ENCODE measurements at regions of chr9 and their contacts with region 1.

Region 1: GRCh38 chr9:130327070-130327780 is 61.7 kb downstream of the HMCN2 start:
- DNase-seq: peak in 1 of 2 experiments; percentile 92
- H3K4me3 ChIP-seq: no peak overlapping the region
- H3K27ac ChIP-seq: peak overlapping the region; percentile 43; the same call in 1 of the 2 replicates
- H3K4me1 ChIP-seq: no peaks in the 10 kb centered on the region; a peak in 1 of 7 replicates
- H3K27me3 ChIP-seq: no peaks in the 10 kb centered on the region
- CTCF ChIP-seq: peak in 2 of 3 experiments; percentile 66 to 84; a peak in 3 of 4 replicates
- EP300 ChIP-seq: no peak
- POLR2A ChIP-seq: no peak
- RAD21 ChIP-seq: peak; percentile 53 to 68

Region 2: GRCh38 chr9:130078547-130078946 is 248.7 kb before region 1 on chr9:
- CTCF ChIA-PET with region 1: no interaction called
- POLR2A ChIA-PET with region 1: no interaction called
- DNase-seq: no peak
- H3K4me3 ChIP-seq: no peak overlapping the region
- H3K27ac ChIP-seq: no peak overlapping the region
- H3K4me1 ChIP-seq: no peaks in the 10 kb centered on the region
- H3K27me3 ChIP-seq: no peaks in the 10 kb centered on the region
- CTCF ChIP-seq: no peak
- EP300 ChIP-seq: no peak
- POLR2A ChIP-seq: no peak
- RAD21 ChIP-seq: no peak

Region 3: GRCh38 chr9:130301483-130302286 is 25.5 kb before region 1 on chr9:
- CTCF ChIA-PET with region 1: interaction called, 33 read pairs
- POLR2A ChIA-PET with region 1: interaction called, 3 read pairs
- DNase-seq: no peak
- H3K4me3 ChIP-seq: no peak overlapping the region
- H3K27ac ChIP-seq: no peak overlapping the region
- H3K4me1 ChIP-seq: peaks cover 0 to 2% (median 0%) of the 10 kb centered on the region in 4 experiments; a peak in 2 of 7 replicates
- H3K27me3 ChIP-seq: no peaks in the 10 kb centered on the region
- CTCF ChIP-seq: no peak
- EP300 ChIP-seq: no peak
- POLR2A ChIP-seq: no peak
- RAD21 ChIP-seq: no peak

Measured in H1 (cell line).